Posterior vena cava (tissue), 2 donors: ENCODE measurements at regions of chr12 and their contacts with region 1.

Region 1: GRCh38 chr12:94553130-94553519 is 93.5 kb upstream of the CEP83 start:
- DNase-seq: peak; percentile 73

Region 2: DNA sequence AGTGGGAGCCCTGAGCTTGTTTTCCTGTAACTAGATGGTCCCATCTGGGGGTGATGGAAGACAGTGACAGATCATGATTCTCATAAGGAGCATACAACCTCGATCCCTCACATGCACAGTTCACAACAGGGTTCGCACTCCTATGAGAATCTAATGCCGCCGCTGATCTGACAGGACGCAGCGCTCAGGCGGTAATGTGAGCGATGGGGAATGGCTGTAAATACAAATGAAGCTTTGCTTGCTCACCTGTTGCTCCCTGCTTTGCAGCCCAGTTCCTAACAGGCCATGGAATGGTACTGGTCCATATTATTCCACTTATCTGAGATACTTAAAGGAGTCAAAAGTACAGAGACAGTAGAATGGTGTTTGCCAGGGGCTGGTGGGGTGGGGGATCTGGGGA is 83.6 kb before region 1 on chr12:
- intact Hi-C with region 1: no loop called
- DNase-seq: no peak

Region 3: DNA sequence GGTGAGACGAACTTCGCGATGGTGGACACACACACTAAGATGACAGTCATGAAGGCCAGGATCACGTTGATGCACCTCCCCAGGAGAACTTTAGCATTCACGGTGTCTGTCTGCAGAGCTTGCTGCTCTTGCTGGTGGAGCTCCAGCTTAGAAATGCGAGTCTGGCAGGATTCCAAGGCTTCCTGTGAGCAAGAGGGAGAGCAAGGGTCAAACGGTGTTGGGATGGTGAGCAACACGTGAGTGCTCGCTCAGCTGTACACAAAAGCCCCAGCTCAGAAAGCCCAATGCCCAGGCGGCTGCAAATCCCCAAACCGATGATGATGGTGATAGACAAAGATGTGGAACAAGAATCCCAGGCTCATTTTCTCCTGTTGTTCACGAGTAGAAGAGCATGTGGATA is 18.4 kb after region 1 on chr12:
- intact Hi-C with region 1: no loop called
- DNase-seq: no peak

Region 4: GRCh38 chr12:94762259-94762942 is 209.3 kb after region 1 on chr12:
- intact Hi-C with region 1: loop called in 1 of 2 experiments (anchors 10 kb)
- DNase-seq: no peak